Caco-2 (cell line): ENCODE measurements at regions of chr2 and their contacts with region 1.

Region 1: DNA sequence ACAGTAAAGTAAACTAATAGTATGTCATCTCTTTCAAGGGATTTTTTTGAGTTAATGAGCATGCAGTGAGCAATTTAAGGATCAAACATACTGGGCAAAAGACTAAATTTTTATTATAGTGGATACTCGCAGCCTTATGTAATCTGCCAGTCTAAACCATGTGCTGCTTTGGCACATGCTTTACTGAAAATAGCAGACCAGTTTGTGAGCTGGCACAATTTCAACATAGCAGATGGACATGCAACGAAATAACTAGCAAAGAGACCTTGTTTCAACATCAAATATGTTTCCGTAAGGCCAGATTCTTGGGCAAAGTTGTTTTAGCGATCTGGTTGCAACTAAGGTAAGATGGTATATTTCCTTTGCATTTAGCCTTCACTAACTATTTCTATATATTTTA is 807.3 kb downstream of the NR4A2 start:
- DNase-seq: no peak
- H3K4me3 ChIP-seq: no peak overlapping the region
- H3K4me3 Mint-ChIP-seq: no peak overlapping the region
- H3K27ac Mint-ChIP-seq: no peak overlapping the region
- H3K4me1 ChIP-seq: no peaks in the 10 kb centered on the region
- H3K4me1 Mint-ChIP-seq: peaks cover 5% of the 10 kb centered on the region
- H3K27me3 ChIP-seq: no peaks in the 10 kb centered on the region
- H3K27me3 Mint-ChIP-seq: peaks cover 5% of the 10 kb centered on the region
- CTCF ChIP-seq: no peak

Region 2: DNA sequence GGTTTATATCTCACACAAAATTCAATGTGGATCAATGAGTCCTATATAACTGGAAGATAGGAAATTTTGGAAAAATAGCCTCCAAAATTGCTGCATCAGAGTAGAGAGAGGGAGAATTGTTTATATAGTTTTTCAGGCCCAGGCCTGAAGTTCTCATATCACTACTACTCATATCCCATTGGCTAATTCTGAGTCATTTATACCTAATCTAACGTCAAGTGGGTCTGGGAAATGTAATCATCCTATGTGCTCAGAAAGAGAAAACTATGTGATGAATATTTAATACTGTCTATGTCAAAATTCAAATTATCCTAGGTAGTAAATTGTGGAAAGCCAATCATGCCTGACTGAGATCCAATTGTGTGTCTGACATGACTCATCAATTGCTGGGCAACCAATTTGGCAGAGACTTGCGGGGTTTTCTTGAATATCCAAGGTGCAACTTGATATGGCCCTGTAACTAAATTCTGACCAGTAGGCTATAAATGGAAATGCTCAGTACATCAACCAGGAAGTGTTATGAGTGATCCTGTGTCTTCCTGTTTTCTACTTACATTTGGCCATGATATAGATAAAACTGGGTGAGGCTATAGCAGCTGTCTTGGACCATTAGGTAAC is 82.3 kb before region 1 on chr2:
- CTCF ChIA-PET with region 1: no interaction called
- POLR2A ChIA-PET with region 1: no interaction called
- intact Hi-C with region 1: no loop called
- DNase-seq: no peak
- H3K4me3 ChIP-seq: no peak overlapping the region
- H3K4me3 Mint-ChIP-seq: no peak overlapping the region
- H3K27ac Mint-ChIP-seq: no peak overlapping the region
- H3K4me1 ChIP-seq: no peaks in the 10 kb centered on the region
- H3K4me1 Mint-ChIP-seq: no peaks in the 10 kb centered on the region
- H3K27me3 ChIP-seq: no peaks in the 10 kb centered on the region
- H3K27me3 Mint-ChIP-seq: no peaks in the 10 kb centered on the region
- CTCF ChIP-seq: no peak

Region 3: GRCh38 chr2:155546715-155547555 is 21.7 kb after region 1 on chr2:
- CTCF ChIA-PET with region 1: no interaction called
- POLR2A ChIA-PET with region 1: no interaction called
- intact Hi-C with region 1: loop called (anchors 2 kb)
- DNase-seq: no peak
- H3K4me3 ChIP-seq: no peak overlapping the region
- H3K4me3 Mint-ChIP-seq: no peak overlapping the region
- H3K27ac Mint-ChIP-seq: no peak overlapping the region
- H3K4me1 ChIP-seq: no peaks in the 10 kb centered on the region
- H3K4me1 Mint-ChIP-seq: no peaks in the 10 kb centered on the region
- H3K27me3 ChIP-seq: no peaks in the 10 kb centered on the region
- H3K27me3 Mint-ChIP-seq: no peaks in the 10 kb centered on the region
- CTCF ChIP-seq: no peak